ENCODE measurements at regions of chr14 and their contacts with region 1.

Region 1: DNA sequence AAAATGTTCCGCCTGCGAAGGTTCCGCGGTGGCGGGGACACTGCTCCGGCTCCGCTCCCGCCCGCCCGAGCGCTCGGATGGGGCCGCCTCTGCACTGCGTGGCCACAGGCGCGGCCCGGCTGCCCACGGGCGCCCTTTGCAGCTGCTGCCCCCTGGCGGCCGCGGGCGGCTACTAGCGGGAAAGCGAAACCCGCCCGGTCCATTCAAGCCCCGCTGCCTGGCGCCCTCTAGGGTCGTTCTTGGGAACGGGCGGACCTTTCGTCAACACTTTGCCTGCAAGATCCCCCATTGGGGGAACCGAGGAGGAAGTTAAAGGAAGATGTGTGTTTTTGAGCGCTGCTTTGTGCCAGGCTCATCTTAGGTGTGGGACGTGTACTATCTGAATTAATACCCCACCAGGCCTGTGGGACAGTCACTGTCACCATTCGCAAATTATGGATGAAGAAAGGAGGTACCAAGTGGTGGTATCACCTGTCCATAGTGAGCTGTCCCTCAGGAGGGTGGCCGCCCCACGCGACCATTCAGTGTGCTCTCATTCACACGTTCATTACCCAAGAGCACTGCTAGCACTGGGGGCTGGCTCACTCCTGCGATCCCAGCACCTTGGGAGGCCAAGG is 19.4 kb downstream of the GPR132 start:
- DNase-seq: peak; percentile 86 to 96 (median 93)
- ATAC-seq: peak; percentile 93
- H3K4me3 ChIP-seq: no peak overlapping the region
- H3K4me3 Mint-ChIP-seq: peak overlapping the region; percentile 67
- H3K27ac ChIP-seq: no peak overlapping the region
- H3K27ac Mint-ChIP-seq: peak overlapping the region; percentile 70
- H3K4me1 ChIP-seq: peaks cover 10% of the 10 kb centered on the region
- H3K4me1 Mint-ChIP-seq: peaks cover 11% of the 10 kb centered on the region
- H3K27me3 ChIP-seq: no peaks in the 10 kb centered on the region
- H3K27me3 Mint-ChIP-seq: peaks cover 5% of the 10 kb centered on the region
- CTCF ChIP-seq: peak; percentile 100

Region 2: DNA sequence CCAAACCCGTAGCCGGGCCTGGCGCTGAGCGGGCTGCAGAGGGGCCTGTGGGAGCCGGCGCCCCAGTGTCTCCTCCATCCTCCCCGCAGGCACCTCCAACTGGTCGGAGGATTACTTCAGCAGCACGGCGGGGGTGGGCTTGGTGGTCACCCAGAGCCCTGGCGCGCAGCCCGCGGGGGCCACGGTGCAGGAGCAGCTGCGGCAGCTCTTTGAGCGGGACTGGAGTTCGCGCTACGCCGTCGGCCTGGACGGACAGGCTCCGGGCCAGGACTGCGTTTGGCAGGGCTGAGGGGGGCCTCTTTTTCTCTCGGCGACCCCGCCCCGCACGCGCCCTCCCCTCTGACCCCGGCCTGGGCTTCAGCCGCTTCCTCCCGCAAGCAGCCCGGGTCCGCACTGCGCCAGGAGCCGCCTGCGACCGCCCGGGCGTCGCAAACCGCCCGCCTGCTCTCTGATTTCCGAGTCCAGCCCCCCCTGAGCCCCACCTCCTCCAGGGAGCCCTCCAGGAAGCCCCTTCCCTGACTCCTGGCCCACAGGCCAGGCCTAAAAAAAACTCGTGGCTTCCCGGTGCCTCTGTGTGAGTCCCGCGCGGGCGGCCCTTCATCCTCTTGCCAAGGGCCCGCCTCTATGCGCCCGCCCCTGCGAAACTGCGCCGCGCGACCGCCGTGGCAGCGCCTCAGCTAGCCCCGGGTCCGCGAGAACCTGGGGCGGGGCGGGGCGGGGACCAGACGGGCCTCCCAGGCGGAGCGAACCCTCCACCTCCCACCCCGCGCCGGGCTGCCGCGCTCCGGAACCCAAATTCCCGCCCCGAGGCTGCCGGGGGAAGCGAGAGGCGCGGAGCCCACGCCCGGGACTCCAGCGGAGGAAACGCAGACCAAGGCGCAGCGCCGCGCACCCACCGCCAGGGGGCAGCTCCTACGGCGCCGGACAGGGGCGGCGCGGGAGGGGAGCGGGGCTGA is 112.9 kb before region 1 on chr14:
- CTCF ChIA-PET with region 1: interaction called, 6 read pairs
- POLR2A ChIA-PET with region 1: no interaction called
- intact Hi-C with region 1: loop called in 1 of 2 experiments (anchors 1 kb)
- DNase-seq: peak; percentile 70 to 91 (median 81)
- ATAC-seq: peak; percentile 97
- H3K4me3 ChIP-seq: peak overlapping the region; percentile 45
- H3K4me3 Mint-ChIP-seq: peak overlapping the region; percentile 77
- H3K27ac ChIP-seq: no peak overlapping the region
- H3K27ac Mint-ChIP-seq: no peak overlapping the region
- H3K4me1 ChIP-seq: peaks cover 10% of the 10 kb centered on the region
- H3K4me1 Mint-ChIP-seq: peaks cover 5% of the 10 kb centered on the region
- H3K27me3 ChIP-seq: no peaks in the 10 kb centered on the region
- H3K27me3 Mint-ChIP-seq: peaks cover 15% of the 10 kb centered on the region
- CTCF ChIP-seq: peak; percentile 66

Region 3: DNA sequence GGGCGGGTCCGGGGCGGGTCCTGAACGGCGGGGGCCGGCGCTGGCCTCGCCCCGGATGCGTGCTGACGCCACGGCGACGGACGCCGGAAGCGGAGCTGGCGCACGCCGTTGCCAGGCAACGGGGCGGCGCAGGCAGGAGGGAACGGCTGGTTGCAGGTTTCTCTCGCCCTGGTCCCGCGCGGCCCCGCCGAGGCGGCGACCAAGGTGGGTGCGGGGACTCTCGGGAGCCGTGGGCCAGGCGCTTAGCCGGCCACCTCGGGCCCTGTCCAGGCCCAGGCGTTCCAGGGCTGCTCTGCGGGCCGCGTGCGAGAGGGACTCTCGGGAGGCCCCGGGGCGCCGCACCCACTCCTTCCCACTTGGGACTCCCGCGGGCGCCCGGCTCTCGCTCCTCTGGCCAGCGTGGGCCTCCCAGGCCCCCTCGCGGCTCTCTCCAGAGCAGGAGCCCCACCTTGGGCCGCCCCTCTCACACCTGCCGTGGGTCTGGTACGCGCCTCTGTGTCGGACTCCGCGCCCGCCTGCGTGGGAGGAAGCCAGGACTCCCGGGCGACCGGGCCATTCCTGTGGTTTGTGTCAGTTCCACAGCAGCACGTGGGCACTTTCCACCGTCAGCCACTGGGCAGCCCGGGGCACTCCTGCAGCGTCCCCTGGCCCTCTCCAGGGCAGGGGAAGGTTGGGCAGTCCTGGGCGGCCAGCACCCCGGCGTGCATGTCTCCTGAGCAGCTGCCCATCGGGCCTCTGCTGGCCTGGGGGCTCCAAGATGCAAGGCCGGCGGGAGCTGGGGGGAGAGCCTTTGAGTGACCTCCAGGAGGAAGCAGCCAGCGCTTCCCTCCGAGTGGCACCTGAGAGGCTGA is 59.9 kb before region 1 on chr14 and contains the start of gene CLBA1:
- CTCF ChIA-PET with region 1: interaction called, 17 read pairs
- POLR2A ChIA-PET with region 1: interaction called, 4 read pairs
- intact Hi-C with region 1: no loop called
- DNase-seq: peak; percentile 73 to 97 (median 86)
- ATAC-seq: peak; percentile 96
- H3K4me3 ChIP-seq: peak within 1 kb of the TSS; percentile 56
- H3K4me3 Mint-ChIP-seq: peak within 1 kb of the TSS; percentile 75
- H3K27ac ChIP-seq: no peak within 1 kb of the TSS
- H3K27ac Mint-ChIP-seq: peak within 1 kb of the TSS; percentile 80
- H3K4me1 ChIP-seq: peaks cover 16% of the 10 kb centered on the region
- H3K4me1 Mint-ChIP-seq: no peaks in the 10 kb centered on the region
- H3K27me3 ChIP-seq: no peaks in the 10 kb centered on the region
- H3K27me3 Mint-ChIP-seq: no peaks in the 10 kb centered on the region
- CTCF ChIP-seq: no peak
- total RNA-seq, gene CLBA1: 1.7 to 1.8 TPM

Region 4: DNA sequence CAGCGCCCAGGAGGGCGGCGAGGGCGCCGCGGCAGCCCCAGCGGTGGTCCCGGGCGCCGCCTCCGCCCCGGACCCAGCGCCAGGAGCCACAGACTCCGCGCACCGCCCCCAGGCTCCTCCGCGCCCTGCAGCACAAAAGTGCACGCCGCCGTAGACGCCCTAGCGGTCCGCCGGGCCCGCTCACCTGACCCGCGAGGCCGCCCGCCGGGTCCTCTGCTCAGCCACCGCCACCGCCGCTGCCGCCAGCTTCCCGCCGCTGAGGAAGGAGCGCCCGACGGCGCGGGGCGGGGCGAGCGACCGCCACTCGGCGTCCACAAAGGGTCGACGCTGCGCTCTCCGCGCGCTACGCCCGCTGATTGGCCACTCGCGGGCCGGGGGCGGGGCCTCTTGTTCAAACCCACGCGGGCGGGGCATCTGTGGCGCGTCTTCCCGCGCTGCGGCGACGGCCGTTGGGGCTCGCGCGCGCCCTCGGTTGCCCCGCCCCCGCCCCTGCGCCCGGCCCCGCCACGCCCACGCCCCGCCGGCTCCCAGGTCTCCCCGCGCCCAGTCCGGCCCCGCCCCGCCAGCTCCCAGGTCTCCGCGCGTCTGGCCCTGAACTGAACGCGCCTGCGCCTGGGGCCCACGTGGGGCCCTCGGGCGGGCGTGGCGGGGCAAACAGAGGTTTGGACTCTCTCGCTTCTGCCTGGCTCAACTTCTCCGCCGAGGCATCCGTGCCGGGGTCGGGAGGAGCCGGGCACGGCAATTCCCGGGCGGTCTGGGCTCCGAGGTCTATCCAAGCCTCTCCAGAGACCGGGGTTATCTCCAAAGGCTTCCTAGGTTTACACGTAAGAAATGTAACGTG is 24.8 kb before region 1 on chr14 and contains the start of gene CDCA4:
- CTCF ChIA-PET with region 1: interaction called, 23 read pairs
- POLR2A ChIA-PET with region 1: interaction called, 8 read pairs
- intact Hi-C with region 1: loop called (anchors 1 to 2 kb)
- DNase-seq: peak; percentile 94 to 99 (median 98)
- ATAC-seq: peak; percentile 80
- H3K4me3 ChIP-seq: peak within 1 kb of the TSS; percentile 73
- H3K4me3 Mint-ChIP-seq: peak within 1 kb of the TSS; percentile 97
- H3K27ac ChIP-seq: peak within 1 kb of the TSS; percentile 71 to 73
- H3K27ac Mint-ChIP-seq: peak within 1 kb of the TSS; percentile 93
- H3K4me1 ChIP-seq: peaks cover 62% of the 10 kb centered on the region
- H3K4me1 Mint-ChIP-seq: peaks cover 62% of the 10 kb centered on the region
- H3K27me3 ChIP-seq: no peaks in the 10 kb centered on the region
- H3K27me3 Mint-ChIP-seq: no peaks in the 10 kb centered on the region
- CTCF ChIP-seq: no peak
- total RNA-seq, gene CDCA4: 17.7 to 18.8 TPM

Region 5: GRCh38 chr14:105034314-105035039 is 11.3 kb before region 1 on chr14:
- CTCF ChIA-PET with region 1: interaction called, 32 read pairs
- POLR2A ChIA-PET with region 1: no interaction called
- intact Hi-C with region 1: no loop called
- DNase-seq: peak in 2 of 14 experiments; percentile 40 to 60
- ATAC-seq: no peak
- H3K4me3 ChIP-seq: no peak overlapping the region
- H3K4me3 Mint-ChIP-seq: peak overlapping the region; percentile 42
- H3K27ac ChIP-seq: no peak overlapping the region
- H3K27ac Mint-ChIP-seq: peak overlapping the region; percentile 80
- H3K4me1 ChIP-seq: peaks cover 14% of the 10 kb centered on the region
- H3K4me1 Mint-ChIP-seq: peaks cover 15% of the 10 kb centered on the region
- H3K27me3 ChIP-seq: no peaks in the 10 kb centered on the region
- H3K27me3 Mint-ChIP-seq: no peaks in the 10 kb centered on the region
- CTCF ChIP-seq: no peak

Region 6: GRCh38 chr14:105065280-105066228 is 19.7 kb after region 1 on chr14 and contains the start of gene GPR132:
- CTCF ChIA-PET with region 1: interaction called, 44 read pairs
- POLR2A ChIA-PET with region 1: interaction called, 17 read pairs
- intact Hi-C with region 1: loop called in 1 of 2 experiments (anchors 2 kb)
- DNase-seq: peak; percentile 81 to 99 (median 86)
- ATAC-seq: peak; percentile 87
- H3K4me3 ChIP-seq: peak within 1 kb of the TSS; percentile 82
- H3K4me3 Mint-ChIP-seq: peak within 1 kb of the TSS; percentile 100
- H3K27ac ChIP-seq: peak within 1 kb of the TSS; percentile 94 to 95
- H3K27ac Mint-ChIP-seq: peak within 1 kb of the TSS; percentile 91
- H3K4me1 ChIP-seq: peaks cover 98% of the 10 kb centered on the region
- H3K4me1 Mint-ChIP-seq: peaks cover 72% of the 10 kb centered on the region
- H3K27me3 ChIP-seq: no peaks in the 10 kb centered on the region
- H3K27me3 Mint-ChIP-seq: no peaks in the 10 kb centered on the region
- CTCF ChIP-seq: no peak
- total RNA-seq, gene GPR132: 64.4 to 66.7 TPM

Region 7: GRCh38 chr14:105086833-105087307 is 41.1 kb after region 1 on chr14:
- CTCF ChIA-PET with region 1: interaction called, 37 read pairs
- POLR2A ChIA-PET with region 1: interaction called, 20 read pairs
- intact Hi-C with region 1: loop called (anchors 1 to 2 kb)
- DNase-seq: peak; percentile 72 to 92 (median 86)
- ATAC-seq: peak; percentile 89
- H3K4me3 ChIP-seq: peak overlapping the region; percentile 60
- H3K4me3 Mint-ChIP-seq: peak overlapping the region; percentile 72
- H3K27ac ChIP-seq: peak overlapping the region in 1 of 2 donors; percentile 46
- H3K27ac Mint-ChIP-seq: no peak overlapping the region
- H3K4me1 ChIP-seq: peaks cover 35% of the 10 kb centered on the region
- H3K4me1 Mint-ChIP-seq: peaks cover 12% of the 10 kb centered on the region
- H3K27me3 ChIP-seq: peaks cover 0 to 5% of the 10 kb centered on the region in 2 experiments
- H3K27me3 Mint-ChIP-seq: no peaks in the 10 kb centered on the region
- CTCF ChIP-seq: peak; percentile 83

Measured in CD4-positive, alpha-beta T cell (primary cell).